CD8-positive, alpha-beta T cell (primary cell): ENCODE measurements at regions of chr3 and their contacts with region 1.

Region 1: GRCh38 chr3:150528354-150528797 is 17.9 kb downstream of the SERP1 start:
- DNase-seq: peak in 2 of 9 experiments; percentile 45 to 50
- ATAC-seq: peak; percentile 54
- H3K4me3 ChIP-seq: no peak overlapping the region
- H3K4me3 Mint-ChIP-seq: no peak overlapping the region
- H3K27ac ChIP-seq: no peak overlapping the region
- H3K27ac Mint-ChIP-seq: no peak overlapping the region
- H3K4me1 ChIP-seq: no peaks in the 10 kb centered on the region
- H3K4me1 Mint-ChIP-seq: no peaks in the 10 kb centered on the region
- H3K27me3 ChIP-seq: no peaks in the 10 kb centered on the region
- H3K27me3 Mint-ChIP-seq: no peaks in the 10 kb centered on the region
- CTCF ChIP-seq: peak; percentile 67

Region 2: GRCh38 chr3:150577859-150578258 is 49.5 kb after region 1 on chr3:
- CTCF ChIA-PET with region 1: no interaction called
- POLR2A ChIA-PET with region 1: no interaction called
- intact Hi-C with region 1: loop called in 1 of 2 experiments (anchors 1 kb)
- DNase-seq: no peak
- ATAC-seq: no peak
- H3K4me3 ChIP-seq: no peak overlapping the region
- H3K4me3 Mint-ChIP-seq: no peak overlapping the region
- H3K27ac ChIP-seq: no peak overlapping the region
- H3K27ac Mint-ChIP-seq: no peak overlapping the region
- H3K4me1 ChIP-seq: peaks cover 6% of the 10 kb centered on the region
- H3K4me1 Mint-ChIP-seq: peaks cover 34% of the 10 kb centered on the region
- H3K27me3 ChIP-seq: no peaks in the 10 kb centered on the region
- H3K27me3 Mint-ChIP-seq: no peaks in the 10 kb centered on the region
- CTCF ChIP-seq: no peak